ENCODE measurements at regions of chr9 and their contacts with region 1.

Region 1: DNA sequence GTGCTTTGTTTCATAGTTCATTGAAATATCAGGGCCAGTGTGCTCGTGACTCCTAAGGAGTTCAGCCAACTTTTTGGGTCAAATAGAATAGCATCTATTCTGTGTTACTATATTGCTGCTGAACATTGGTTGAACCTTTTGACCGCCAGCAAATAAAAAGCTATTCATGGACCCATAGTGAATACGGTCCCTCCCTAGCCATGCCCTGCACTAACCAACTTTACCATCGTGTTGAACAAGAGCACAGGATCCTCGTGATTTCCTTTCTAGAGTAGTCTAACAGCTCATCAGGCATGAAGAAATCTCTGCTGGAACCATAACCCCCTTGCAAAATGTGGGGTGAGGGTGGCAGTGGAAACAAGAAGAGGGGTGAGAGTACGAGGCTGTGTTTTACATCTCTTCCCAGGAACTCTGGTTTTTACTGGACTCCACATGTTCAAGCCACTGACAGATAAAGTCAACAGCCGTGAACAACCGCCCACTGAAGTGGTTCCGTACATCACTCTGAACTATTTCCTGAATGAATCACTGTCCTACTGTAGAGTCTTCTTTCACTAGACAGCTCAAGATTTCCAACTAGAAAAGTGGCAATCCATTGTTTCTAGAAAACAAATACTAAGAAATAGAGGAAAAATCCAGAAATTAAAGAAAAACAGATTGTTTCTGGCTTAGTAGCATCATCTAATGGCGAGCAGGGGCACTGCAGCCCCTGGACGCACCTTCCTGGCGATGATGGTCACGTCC is 70.1 kb upstream of the SPATA31E1 start:
- H3K4me3 Mint-ChIP-seq: no peak overlapping the region
- H3K27ac Mint-ChIP-seq: no peak overlapping the region
- H3K4me1 Mint-ChIP-seq: peaks cover 55% of the 10 kb centered on the region
- H3K27me3 Mint-ChIP-seq: peaks cover 42% of the 10 kb centered on the region

Region 2: GRCh38 chr9:87336914-87337333 is 475.6 kb before region 1 on chr9:
- intact Hi-C with region 1: loop called (anchors 5 kb)
- H3K4me3 Mint-ChIP-seq: peak overlapping the region; percentile 50
- H3K27ac Mint-ChIP-seq: no peak overlapping the region
- H3K4me1 Mint-ChIP-seq: peaks cover 12% of the 10 kb centered on the region
- H3K27me3 Mint-ChIP-seq: peaks cover 31% of the 10 kb centered on the region

Region 3: GRCh38 chr9:87678650-87679515 is 133.7 kb before region 1 on chr9:
- intact Hi-C with region 1: loop called (anchors 1 kb)
- H3K4me3 Mint-ChIP-seq: no peak overlapping the region
- H3K27ac Mint-ChIP-seq: no peak overlapping the region
- H3K4me1 Mint-ChIP-seq: peaks cover 45% of the 10 kb centered on the region
- H3K27me3 Mint-ChIP-seq: no peaks in the 10 kb centered on the region

Region 4: DNA sequence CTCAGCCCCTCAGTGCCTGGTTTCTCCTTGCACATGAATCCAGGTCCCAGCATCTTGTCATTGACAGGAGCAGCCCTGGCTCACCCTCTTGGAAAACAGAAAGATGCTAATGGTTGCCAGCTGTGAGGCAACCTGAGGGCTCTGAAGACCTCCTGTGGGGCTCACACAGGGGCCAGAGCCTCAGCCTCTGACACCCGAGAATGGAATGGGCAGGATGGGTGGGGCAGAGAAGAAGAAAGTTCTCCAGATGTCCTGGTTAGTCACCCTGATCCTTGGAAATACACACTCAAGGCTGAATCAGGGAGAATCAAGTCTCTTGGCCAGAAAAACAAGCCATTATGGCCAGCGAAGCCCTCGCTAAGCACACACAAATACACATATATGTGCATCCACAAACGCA is 37.8 kb after region 1 on chr9:
- intact Hi-C with region 1: no loop called
- H3K4me3 Mint-ChIP-seq: no peak overlapping the region
- H3K27ac Mint-ChIP-seq: no peak overlapping the region
- H3K4me1 Mint-ChIP-seq: peaks cover 12% of the 10 kb centered on the region
- H3K27me3 Mint-ChIP-seq: peaks cover 59% of the 10 kb centered on the region

Measured in dendritic cell treated with granulocyte-macrophage colony-stimulating factor and Interleukin-4, amounts not matched to agents 40 ng/mL and 50 ng/mL, for 4 days (primary cell).